ENCODE measurements at regions of chr17 and their contacts with region 1.

Region 1: DNA sequence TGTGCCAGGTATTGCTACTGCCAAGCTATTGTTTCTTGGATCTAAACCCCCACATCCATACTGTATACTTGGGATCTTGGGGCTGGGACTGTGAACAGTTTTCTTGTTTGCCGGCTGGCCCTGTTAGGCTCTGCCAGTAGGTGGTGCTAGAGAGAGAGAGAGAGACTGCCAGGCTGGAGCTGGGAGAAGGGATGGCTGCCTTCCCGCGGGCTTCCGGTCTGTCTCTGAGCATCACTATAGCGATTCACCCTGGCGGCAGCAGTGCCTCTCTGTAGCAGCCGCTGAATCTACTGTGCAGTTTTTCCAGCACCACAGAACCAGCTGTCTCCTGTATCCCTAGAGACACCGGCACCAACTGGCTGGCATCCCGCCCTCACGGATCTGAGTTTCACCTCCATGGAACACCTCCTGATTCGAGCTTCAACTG is 201.2 kb downstream of the UTP18 start:
- DNase-seq: peak; percentile 75
- H3K4me3 Mint-ChIP-seq: no peak overlapping the region
- H3K27ac Mint-ChIP-seq: no peak overlapping the region
- H3K4me1 Mint-ChIP-seq: no peaks in the 10 kb centered on the region
- H3K27me3 Mint-ChIP-seq: peaks cover 28% of the 10 kb centered on the region
- CTCF ChIP-seq: peak; percentile 74

Region 2: DNA sequence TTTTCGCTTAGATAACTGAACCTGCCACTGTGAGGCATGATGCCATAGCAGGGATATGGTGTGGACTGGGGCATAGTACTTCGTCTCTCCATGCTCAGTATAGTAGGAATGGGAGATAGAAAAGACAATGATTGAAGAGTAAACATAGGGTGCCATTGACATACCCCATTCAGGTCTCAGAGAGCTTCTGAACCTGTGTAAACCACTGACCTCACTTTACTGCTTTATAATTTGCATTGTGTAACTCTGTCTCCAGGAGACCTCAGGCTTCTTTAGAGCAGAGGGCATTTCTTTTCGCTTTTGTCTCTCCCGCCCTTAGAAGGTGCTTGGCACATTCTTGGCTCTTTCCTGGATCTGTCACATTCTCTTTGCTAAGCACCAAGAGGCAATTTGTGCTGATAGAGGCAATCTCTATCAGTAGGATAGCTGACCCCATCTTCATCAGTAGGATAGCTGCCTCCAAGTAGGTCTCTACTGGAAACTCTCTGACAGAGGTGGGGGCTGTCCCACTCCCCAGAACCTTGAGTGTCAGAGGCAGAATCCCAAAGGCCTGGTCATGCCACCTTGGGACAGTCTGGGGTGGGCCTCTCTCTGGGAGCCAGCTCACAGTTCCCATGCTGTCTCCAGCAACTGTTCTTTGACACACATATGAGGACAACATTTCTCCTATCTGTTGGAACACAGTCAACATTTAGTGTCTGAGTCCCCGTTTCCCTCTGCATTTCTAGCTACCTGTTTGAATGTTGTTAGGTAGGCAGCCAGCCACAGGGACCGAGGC is 19.3 kb before region 1 on chr17:
- CTCF ChIA-PET with region 1: interaction called, 14 read pairs
- POLR2A ChIA-PET with region 1: no interaction called
- intact Hi-C with region 1: no loop called
- DNase-seq: no peak
- H3K4me3 Mint-ChIP-seq: no peak overlapping the region
- H3K27ac Mint-ChIP-seq: no peak overlapping the region
- H3K4me1 Mint-ChIP-seq: no peaks in the 10 kb centered on the region
- H3K27me3 Mint-ChIP-seq: peaks cover 23% of the 10 kb centered on the region
- CTCF ChIP-seq: no peak

Region 3: GRCh38 chr17:51472670-51473205 is 11.1 kb after region 1 on chr17:
- CTCF ChIA-PET with region 1: interaction called, 29 read pairs
- POLR2A ChIA-PET with region 1: interaction called, 3 read pairs
- intact Hi-C with region 1: no loop called
- DNase-seq: no peak
- H3K4me3 Mint-ChIP-seq: no peak overlapping the region
- H3K27ac Mint-ChIP-seq: no peak overlapping the region
- H3K4me1 Mint-ChIP-seq: no peaks in the 10 kb centered on the region
- H3K27me3 Mint-ChIP-seq: peaks cover 76% of the 10 kb centered on the region
- CTCF ChIP-seq: no peak

Region 4: DNA sequence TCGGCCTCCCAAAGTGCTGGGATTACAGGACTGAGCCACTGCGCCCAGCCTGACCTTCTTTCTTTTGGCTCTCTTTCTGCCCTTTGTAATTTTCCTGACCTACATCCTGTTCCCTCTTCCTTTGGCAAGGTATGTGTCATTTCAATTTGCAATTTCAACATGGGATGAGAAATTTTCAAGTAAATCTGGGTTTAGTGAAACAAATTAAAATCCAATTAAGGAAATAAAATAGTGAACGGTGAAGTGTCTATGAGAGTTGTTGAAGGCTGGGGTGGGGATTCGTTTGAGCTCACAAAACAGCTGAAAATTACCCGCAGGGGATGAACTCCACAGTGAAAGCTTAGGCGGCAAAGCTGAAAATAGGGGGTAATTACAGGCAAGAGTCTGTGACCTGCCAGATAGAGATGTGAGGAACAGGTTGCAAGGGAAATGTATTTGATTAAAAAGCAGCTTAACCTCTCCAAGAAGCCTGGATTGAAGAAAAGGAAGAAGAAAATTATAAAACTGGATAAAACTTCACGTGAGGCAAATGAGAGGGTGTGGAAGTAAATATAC is 76.5 kb after region 1 on chr17:
- CTCF ChIA-PET with region 1: interaction called, 6 read pairs
- POLR2A ChIA-PET with region 1: no interaction called
- intact Hi-C with region 1: loop called (anchors 1 kb)
- DNase-seq: no peak
- H3K4me3 Mint-ChIP-seq: no peak overlapping the region
- H3K27ac Mint-ChIP-seq: no peak overlapping the region
- H3K4me1 Mint-ChIP-seq: no peaks in the 10 kb centered on the region
- H3K27me3 Mint-ChIP-seq: no peaks in the 10 kb centered on the region
- CTCF ChIP-seq: no peak

Region 5: GRCh38 chr17:51595826-51596398 is 134.3 kb after region 1 on chr17:
- CTCF ChIA-PET with region 1: no interaction called
- POLR2A ChIA-PET with region 1: no interaction called
- intact Hi-C with region 1: no loop called
- DNase-seq: no peak
- H3K4me3 Mint-ChIP-seq: no peak overlapping the region
- H3K27ac Mint-ChIP-seq: no peak overlapping the region
- H3K4me1 Mint-ChIP-seq: no peaks in the 10 kb centered on the region
- H3K27me3 Mint-ChIP-seq: no peaks in the 10 kb centered on the region
- CTCF ChIP-seq: no peak

Region 6: DNA sequence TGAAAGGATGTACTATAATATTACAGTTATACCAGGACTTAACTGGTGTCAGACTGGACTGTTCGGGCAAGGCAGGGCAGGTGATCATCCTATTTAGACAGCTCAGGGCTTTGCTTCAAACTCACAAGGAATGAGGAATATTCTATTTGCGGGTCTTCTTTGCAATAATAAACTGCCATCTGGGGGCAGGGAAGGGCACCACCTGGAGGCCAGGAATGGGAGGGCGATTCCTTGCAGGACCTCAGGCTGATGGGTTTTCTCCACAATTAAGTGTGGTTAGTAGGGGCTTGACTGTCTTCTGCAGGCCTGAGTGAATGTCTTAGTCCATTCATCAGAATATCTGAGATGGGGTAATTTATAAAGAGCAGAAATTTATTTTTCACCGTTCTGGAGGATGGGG is 272.9 kb after region 1 on chr17:
- CTCF ChIA-PET with region 1: interaction called, 3 read pairs
- POLR2A ChIA-PET with region 1: no interaction called
- intact Hi-C with region 1: loop called (anchors 1 kb)
- DNase-seq: peak; percentile 33
- H3K4me3 Mint-ChIP-seq: no peak overlapping the region
- H3K27ac Mint-ChIP-seq: no peak overlapping the region
- H3K4me1 Mint-ChIP-seq: no peaks in the 10 kb centered on the region
- H3K27me3 Mint-ChIP-seq: peaks cover 11% of the 10 kb centered on the region
- CTCF ChIP-seq: peak; percentile 74